SK-N-SH (cell line): ENCODE measurements at regions of chr6 and their contacts with region 1.

Region 1: GRCh38 chr6:39361657-39362486 is 39.4 kb upstream of the KCNK16 start:
- DNase-seq: peak; percentile 88
- H3K4me3 ChIP-seq: no peak overlapping the region
- H3K27ac ChIP-seq: peak overlapping the region in 1 of 2 experiments; percentile 19; a peak in 1 of 4 replicates
- H3K4me1 ChIP-seq: peaks cover 0 to 20% of the 10 kb centered on the region in 2 experiments; a peak in 1 of 4 replicates
- H3K27me3 ChIP-seq: no peaks in the 10 kb centered on the region
- CTCF ChIP-seq: peak; percentile 70
- EP300 ChIP-seq: no peak
- RAD21 ChIP-seq: peak; percentile 84

Region 2: GRCh38 chr6:39280247-39280731 is 81.6 kb before region 1 on chr6:
- CTCF ChIA-PET with region 1: no interaction called
- POLR2A ChIA-PET with region 1: no interaction called
- DNase-seq: no peak
- H3K4me3 ChIP-seq: no peak overlapping the region
- H3K27ac ChIP-seq: no peak overlapping the region
- H3K4me1 ChIP-seq: no peaks in the 10 kb centered on the region
- H3K27me3 ChIP-seq: no peaks in the 10 kb centered on the region
- CTCF ChIP-seq: no peak
- EP300 ChIP-seq: no peak
- RAD21 ChIP-seq: no peak

Region 3: DNA sequence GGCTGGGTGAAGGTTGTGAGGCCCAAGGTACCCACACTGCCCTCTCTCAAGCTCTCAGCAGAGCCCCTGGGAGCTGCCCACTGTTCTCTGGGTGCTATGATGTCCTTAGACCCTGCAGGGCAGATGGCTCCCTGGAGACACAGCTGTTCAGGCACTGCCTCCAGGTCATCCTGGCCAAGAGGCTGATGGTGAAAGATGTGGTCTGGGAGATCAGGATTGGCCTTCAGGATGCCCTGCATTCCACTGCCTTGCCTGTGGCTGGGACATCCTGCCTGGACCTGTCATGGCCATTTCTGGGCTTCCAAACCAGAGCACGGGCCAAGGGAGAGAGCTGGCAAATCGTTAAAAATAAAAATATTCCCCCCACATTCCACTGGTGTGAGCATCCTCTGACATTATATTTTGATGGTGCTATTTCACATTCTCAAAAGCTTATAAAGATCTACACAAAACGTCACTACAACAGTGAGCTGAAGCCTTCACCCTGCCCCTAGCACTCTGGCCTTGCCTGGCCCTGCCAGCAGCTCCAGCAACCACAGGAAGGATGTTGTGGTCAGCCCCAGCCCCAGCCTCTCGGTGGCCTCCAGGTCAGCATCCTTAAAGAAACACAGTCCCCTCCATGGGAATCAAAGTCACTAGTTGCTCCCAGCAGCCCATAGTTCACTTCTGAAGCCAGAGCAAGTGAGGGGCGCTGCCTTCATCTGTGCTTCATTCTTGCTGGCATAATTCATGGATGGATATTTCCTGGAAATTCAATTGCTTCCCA is 25.9 kb before region 1 on chr6:
- CTCF ChIA-PET with region 1: interaction called, 11 read pairs
- POLR2A ChIA-PET with region 1: interaction called, 3 read pairs
- DNase-seq: no peak
- H3K4me3 ChIP-seq: no peak overlapping the region
- H3K27ac ChIP-seq: no peak overlapping the region
- H3K4me1 ChIP-seq: peaks cover 0 to 27% of the 10 kb centered on the region in 2 experiments; a peak in 1 of 4 replicates
- H3K27me3 ChIP-seq: no peaks in the 10 kb centered on the region
- CTCF ChIP-seq: no peak
- EP300 ChIP-seq: no peak
- RAD21 ChIP-seq: no peak

Region 4: GRCh38 chr6:39347906-39348585 is 13.8 kb before region 1 on chr6:
- CTCF ChIA-PET with region 1: interaction called, 62 read pairs
- POLR2A ChIA-PET with region 1: no interaction called
- DNase-seq: peak; percentile 84
- H3K4me3 ChIP-seq: no peak overlapping the region; a peak in 1 of 4 replicates
- H3K27ac ChIP-seq: no peak overlapping the region
- H3K4me1 ChIP-seq: peaks cover 0 to 1% of the 10 kb centered on the region in 2 experiments; a peak in 1 of 4 replicates
- H3K27me3 ChIP-seq: no peaks in the 10 kb centered on the region
- CTCF ChIP-seq: peak; percentile 85
- EP300 ChIP-seq: no peak
- RAD21 ChIP-seq: peak; percentile 86

Region 5: DNA sequence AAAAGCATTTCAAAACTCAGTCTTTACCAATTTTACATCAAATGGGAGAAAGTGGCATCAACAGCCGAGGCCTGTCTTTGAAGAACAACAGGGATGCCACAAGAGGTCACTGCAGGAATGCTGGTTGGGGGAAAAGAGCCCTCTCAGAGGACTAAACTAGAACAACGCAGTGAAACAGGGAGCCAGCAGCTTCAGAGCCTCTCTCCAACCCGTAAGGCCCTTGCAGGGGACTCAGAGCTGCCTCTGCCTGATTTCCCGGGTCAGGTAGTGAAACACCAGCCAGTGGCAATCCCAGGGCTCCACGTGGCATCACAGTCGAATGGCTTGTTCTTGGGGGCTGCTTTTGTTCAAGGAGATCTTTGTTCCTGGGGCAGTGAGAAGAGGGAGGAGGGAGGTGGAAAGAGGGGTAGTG is 15.7 kb after region 1 on chr6:
- CTCF ChIA-PET with region 1: interaction called, 33 read pairs
- POLR2A ChIA-PET with region 1: no interaction called
- DNase-seq: peak; percentile 79
- H3K4me3 ChIP-seq: no peak overlapping the region
- H3K27ac ChIP-seq: no peak overlapping the region
- H3K4me1 ChIP-seq: peaks cover 0 to 2% of the 10 kb centered on the region in 2 experiments; a peak in 1 of 4 replicates
- H3K27me3 ChIP-seq: no peaks in the 10 kb centered on the region
- CTCF ChIP-seq: peak; percentile 63
- EP300 ChIP-seq: no peak
- RAD21 ChIP-seq: peak; percentile 99

Region 6: GRCh38 chr6:39892490-39893129 is 530.7 kb after region 1 on chr6:
- CTCF ChIA-PET with region 1: interaction called, 45 read pairs
- POLR2A ChIA-PET with region 1: no interaction called
- DNase-seq: peak; percentile 85
- H3K4me3 ChIP-seq: no peak overlapping the region
- H3K27ac ChIP-seq: no peak overlapping the region
- H3K4me1 ChIP-seq: peaks cover 0 to 7% of the 10 kb centered on the region in 2 experiments; a peak in 1 of 4 replicates
- H3K27me3 ChIP-seq: no peaks in the 10 kb centered on the region
- CTCF ChIP-seq: peak; percentile 72
- EP300 ChIP-seq: no peak
- RAD21 ChIP-seq: peak; percentile 89